CD4-positive, alpha-beta memory T cell (primary cell): ENCODE measurements at regions of chr16 and their contacts with region 1.

Region 1: GRCh38 chr16:89815639-89816348 is 653 bp downstream of the FANCA start:
- DNase-seq: no peak
- H3K4me3 ChIP-seq: peak overlapping the region in 1 of 2 donors; percentile 83
- H3K4me3 Mint-ChIP-seq: peak overlapping the region; percentile 71 to 85 (median 82)
- H3K27ac ChIP-seq: no peak overlapping the region
- H3K27ac Mint-ChIP-seq: peak overlapping the region in 2 of 7 donors; percentile 37 to 46
- H3K4me1 ChIP-seq: peaks cover 28% of the 10 kb centered on the region
- H3K4me1 Mint-ChIP-seq: peaks cover 7 to 22% (median 8%) of the 10 kb centered on the region in 4 donors
- H3K27me3 ChIP-seq: no peaks in the 10 kb centered on the region
- H3K27me3 Mint-ChIP-seq: no peaks in the 10 kb centered on the region

Region 2: DNA sequence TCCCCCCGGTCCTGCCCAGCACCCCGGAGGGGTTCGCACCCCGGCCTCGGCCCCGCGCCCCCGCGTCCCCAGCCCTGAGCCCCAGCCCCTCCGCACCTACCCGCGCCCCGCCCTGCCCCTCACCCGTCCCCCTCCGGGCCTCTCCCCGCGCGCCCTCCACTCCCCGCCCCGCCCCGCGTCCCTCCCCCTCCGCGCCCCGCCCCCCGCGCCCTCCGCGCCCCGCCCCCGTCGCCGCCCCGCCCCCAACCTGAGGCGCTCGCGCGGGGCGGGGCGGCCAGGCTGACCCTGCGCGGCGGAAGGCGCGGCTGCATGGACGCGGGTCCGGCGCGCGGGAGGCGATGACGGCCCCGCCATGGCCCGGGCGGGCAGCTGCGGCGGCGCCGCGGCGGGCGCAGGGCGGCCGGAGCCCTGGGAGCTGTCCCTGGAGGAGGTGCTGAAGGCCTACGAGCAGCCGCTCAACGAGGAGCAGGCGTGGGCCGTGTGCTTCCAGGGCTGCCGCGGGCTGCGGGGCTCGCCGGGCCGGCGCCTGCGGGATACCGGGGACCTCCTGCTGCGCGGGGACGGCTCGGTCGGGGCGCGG is 12.5 kb after region 1 on chr16 and contains the start of gene SPIRE2:
- CTCF ChIA-PET with region 1: no interaction called
- POLR2A ChIA-PET with region 1: interaction called, 12 read pairs
- intact Hi-C with region 1: loop called (anchors 1 kb)
- DNase-seq: peak; percentile 71 to 77 (median 75)
- H3K4me3 ChIP-seq: no peak within 1 kb of the TSS
- H3K4me3 Mint-ChIP-seq: peak within 1 kb of the TSS; percentile 36 to 75 (median 60)
- H3K27ac ChIP-seq: no peak within 1 kb of the TSS
- H3K27ac Mint-ChIP-seq: peak within 1 kb of the TSS in 3 of 7 donors; percentile 30 to 79 (median 52)
- H3K4me1 ChIP-seq: peaks cover 8% of the 10 kb centered on the region
- H3K4me1 Mint-ChIP-seq: peaks cover 2 to 13% (median 6%) of the 10 kb centered on the region in 4 donors
- H3K27me3 ChIP-seq: peaks cover 15% of the 10 kb centered on the region
- H3K27me3 Mint-ChIP-seq: peaks cover 14 to 17% of the 10 kb centered on the region in 2 donors
- total RNA-seq, gene SPIRE2: 3.0 to 3.3 TPM